Activated B cell treated with CpG ODN at 0.5 μM for 24 hours (primary cell): ENCODE measurements at regions of chr11 and their contacts with region 1.

Region 1: DNA sequence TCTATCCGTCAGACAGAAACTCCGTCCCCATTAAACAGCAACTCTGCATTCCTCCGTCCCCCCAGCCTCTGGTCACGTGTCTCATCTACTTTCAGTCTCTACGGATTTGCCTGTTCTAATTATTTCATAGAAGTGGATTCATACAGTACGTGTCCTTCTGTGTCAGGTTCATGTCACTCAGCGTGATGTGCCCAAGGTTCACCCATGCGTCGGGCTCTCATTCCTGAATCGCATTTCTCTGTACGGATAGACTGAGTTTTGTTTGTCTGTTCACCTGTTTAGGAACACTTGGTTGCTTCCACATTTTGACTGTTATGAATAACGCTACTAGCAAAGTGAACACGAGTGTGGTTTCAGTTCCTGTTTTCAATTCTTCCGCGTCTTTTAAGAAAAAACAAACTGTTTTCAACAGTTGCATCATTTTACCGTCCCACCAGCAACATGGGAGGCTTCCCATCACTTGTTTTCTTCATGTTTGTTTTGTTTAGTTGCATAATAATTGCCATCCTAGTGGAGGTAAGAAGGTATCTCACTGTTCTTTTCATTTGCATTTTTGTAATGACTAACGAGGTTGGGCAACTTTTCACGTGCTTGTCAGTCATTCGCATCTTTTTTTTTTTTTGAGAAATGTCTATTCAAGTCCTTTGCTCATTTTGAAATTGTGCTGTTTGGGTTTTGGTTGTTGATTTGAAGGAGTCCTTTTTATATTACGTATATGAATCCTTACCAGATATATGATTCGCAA is 8.9 kb upstream of the NLRP6 start:
- DNase-seq: peak; percentile 54
- ATAC-seq: peak; percentile 71
- H3K4me3 Mint-ChIP-seq: peak overlapping the region; percentile 90
- H3K27ac Mint-ChIP-seq: peak overlapping the region; percentile 99
- H3K4me1 Mint-ChIP-seq: peaks cover 40% of the 10 kb centered on the region
- H3K27me3 Mint-ChIP-seq: no peaks in the 10 kb centered on the region
- CTCF ChIP-seq: no peak

Region 2: DNA sequence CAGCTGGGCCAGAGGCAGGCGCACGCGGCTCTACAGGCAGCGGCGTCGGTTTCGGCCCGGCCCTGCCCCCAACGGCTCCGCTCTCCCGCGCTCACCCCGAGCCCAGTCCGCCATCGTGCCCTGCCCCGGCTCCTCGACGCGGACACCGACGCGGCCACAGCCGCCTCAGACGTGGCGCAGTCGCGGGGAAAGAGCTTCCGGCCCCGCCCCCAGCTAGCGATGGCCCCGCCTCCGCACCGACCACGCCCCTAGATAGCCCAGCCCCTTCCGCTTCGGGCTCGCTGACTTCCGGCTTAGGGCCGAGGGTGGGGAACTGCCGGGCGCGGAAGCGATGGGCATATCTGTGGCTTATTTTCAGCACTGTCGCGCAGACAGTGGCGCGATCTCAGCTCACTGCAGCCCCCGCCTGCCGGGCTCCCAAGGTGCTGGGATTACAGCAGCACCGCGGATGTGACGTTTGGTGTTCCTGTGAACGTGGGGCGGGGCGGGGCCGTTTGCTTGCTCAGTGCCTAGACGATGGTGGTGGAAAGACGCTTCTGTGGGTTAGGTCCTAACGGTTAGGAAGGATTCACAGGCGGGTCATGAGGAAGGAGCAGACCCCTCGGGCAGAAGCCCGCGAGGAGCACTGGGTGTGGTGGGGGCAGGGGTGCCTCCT is 62.0 kb before region 1 on chr11 and contains the starts of genes BET1L and RIC8A:
- CTCF ChIA-PET with region 1: no interaction called
- POLR2A ChIA-PET with region 1: interaction called, 54 read pairs
- intact Hi-C with region 1: loop called (anchors 1 kb)
- DNase-seq: peak; percentile 95
- ATAC-seq: peak; percentile 82
- H3K4me3 Mint-ChIP-seq: peak within 1 kb of the TSS; percentile 97
- H3K27ac Mint-ChIP-seq: peak within 1 kb of the TSS; percentile 99
- H3K4me1 Mint-ChIP-seq: peaks cover 46% of the 10 kb centered on the region
- H3K27me3 Mint-ChIP-seq: no peaks in the 10 kb centered on the region
- CTCF ChIP-seq: no peak
- total RNA-seq, gene BET1L: 44.2 and 47.0 TPM in 2 replicates
- total RNA-seq, gene RIC8A: 108 and 114 TPM in 2 replicates

Region 3: GRCh38 chr11:250740-251299 is 18.5 kb before region 1 on chr11:
- CTCF ChIA-PET with region 1: interaction called, 28 read pairs
- POLR2A ChIA-PET with region 1: interaction called, 46 read pairs
- intact Hi-C with region 1: loop called (anchors 2 kb)
- DNase-seq: peak; percentile 60
- ATAC-seq: peak; percentile 96
- H3K4me3 Mint-ChIP-seq: no peak overlapping the region
- H3K27ac Mint-ChIP-seq: peak overlapping the region; percentile 36
- H3K4me1 Mint-ChIP-seq: peaks cover 2% of the 10 kb centered on the region
- H3K27me3 Mint-ChIP-seq: no peaks in the 10 kb centered on the region
- CTCF ChIP-seq: peak; percentile 29

Region 4: DNA sequence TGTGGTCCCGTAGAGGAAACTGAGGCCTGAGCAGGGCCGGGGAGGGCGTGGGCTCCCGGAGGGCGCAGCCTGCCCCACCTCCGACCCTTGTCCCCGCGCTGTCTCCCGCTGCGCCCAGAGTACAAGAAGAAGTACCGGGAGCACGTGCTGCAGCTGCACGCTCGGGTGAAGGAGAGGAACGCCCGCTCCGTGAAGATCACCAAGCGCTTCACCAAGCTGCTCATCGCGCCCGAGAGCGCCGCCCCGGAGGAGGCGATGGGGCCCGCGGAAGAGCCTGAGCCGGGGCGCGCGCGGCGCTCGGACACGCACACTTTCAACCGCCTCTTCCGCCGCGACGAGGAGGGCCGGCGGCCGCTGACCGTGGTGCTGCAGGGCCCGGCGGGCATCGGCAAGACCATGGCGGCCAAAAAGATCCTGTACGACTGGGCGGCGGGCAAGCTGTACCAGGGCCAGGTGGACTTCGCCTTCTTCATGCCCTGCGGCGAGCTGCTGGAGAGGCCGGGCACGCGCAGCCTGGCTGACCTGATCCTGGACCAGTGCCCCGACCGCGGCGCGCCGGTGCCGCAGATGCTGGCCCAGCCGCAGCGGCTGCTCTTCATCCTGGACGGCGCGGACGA is 10.8 kb after region 1 on chr11:
- CTCF ChIA-PET with region 1: no interaction called
- POLR2A ChIA-PET with region 1: interaction called, 74 read pairs
- intact Hi-C with region 1: loop called (anchors 1 kb)
- DNase-seq: peak; percentile 43
- ATAC-seq: peak; percentile 71
- H3K4me3 Mint-ChIP-seq: peak overlapping the region; percentile 74
- H3K27ac Mint-ChIP-seq: no peak overlapping the region
- H3K4me1 Mint-ChIP-seq: peaks cover 32% of the 10 kb centered on the region
- H3K27me3 Mint-ChIP-seq: peaks cover 19% of the 10 kb centered on the region
- CTCF ChIP-seq: no peak

Region 5: GRCh38 chr11:304915-305843 is 35.9 kb after region 1 on chr11:
- CTCF ChIA-PET with region 1: interaction called, 3 read pairs
- POLR2A ChIA-PET with region 1: interaction called, 31 read pairs
- intact Hi-C with region 1: loop called (anchors 1 kb)
- DNase-seq: no peak
- ATAC-seq: peak; percentile 28
- H3K4me3 Mint-ChIP-seq: no peak overlapping the region
- H3K27ac Mint-ChIP-seq: peak overlapping the region; percentile 35
- H3K4me1 Mint-ChIP-seq: peaks cover 55% of the 10 kb centered on the region
- H3K27me3 Mint-ChIP-seq: no peaks in the 10 kb centered on the region
- CTCF ChIP-seq: no peak

Region 6: GRCh38 chr11:326842-327580 is 57.7 kb after region 1 on chr11:
- CTCF ChIA-PET with region 1: no interaction called
- POLR2A ChIA-PET with region 1: interaction called, 12 read pairs
- intact Hi-C with region 1: no loop called
- DNase-seq: peak; percentile 46
- ATAC-seq: peak; percentile 65
- H3K4me3 Mint-ChIP-seq: peak overlapping the region; percentile 53
- H3K27ac Mint-ChIP-seq: peak overlapping the region; percentile 92
- H3K4me1 Mint-ChIP-seq: peaks cover 56% of the 10 kb centered on the region
- H3K27me3 Mint-ChIP-seq: no peaks in the 10 kb centered on the region
- CTCF ChIP-seq: no peak

Region 7: GRCh38 chr11:512761-513595 is 243.7 kb after region 1 on chr11:
- CTCF ChIA-PET with region 1: no interaction called
- POLR2A ChIA-PET with region 1: no interaction called
- intact Hi-C with region 1: no loop called
- DNase-seq: no peak
- ATAC-seq: no peak
- H3K4me3 Mint-ChIP-seq: no peak overlapping the region
- H3K27ac Mint-ChIP-seq: no peak overlapping the region
- H3K4me1 Mint-ChIP-seq: peaks cover 6% of the 10 kb centered on the region
- H3K27me3 Mint-ChIP-seq: no peaks in the 10 kb centered on the region
- CTCF ChIP-seq: no peak